Ascending aorta (tissue), 2 donors: ENCODE measurements at regions of chr6 and their contacts with region 1.

Region 1: DNA sequence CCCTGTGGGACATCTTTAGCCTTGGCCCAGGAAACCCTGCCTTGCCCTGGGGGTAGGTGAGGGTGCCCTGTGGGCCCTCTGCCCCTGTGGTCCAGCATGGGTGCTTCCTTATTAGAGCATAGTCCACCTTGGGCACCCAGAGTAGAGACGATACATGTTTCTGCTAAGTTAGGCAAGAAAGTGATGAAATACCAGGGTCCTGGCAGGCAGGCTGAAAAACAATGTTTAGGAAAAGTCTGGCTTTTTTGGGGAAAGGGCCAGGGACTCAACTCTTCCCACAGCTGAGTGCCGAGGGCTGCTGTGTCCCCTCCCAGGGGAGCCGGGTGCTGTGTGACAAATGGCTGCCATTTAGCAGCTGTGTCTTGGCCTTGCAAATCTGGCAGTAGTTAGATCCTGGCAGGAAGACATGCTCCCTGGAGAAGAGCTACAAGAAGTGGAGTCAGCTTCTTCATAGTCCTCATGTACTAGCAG is 61.5 kb downstream of the RREB1 start:
- DNase-seq: peak in 1 of 2 donors; percentile 80
- H3K4me3 ChIP-seq: no peak overlapping the region
- H3K27ac ChIP-seq: peak overlapping the region; percentile 76 to 83
- H3K4me1 ChIP-seq: peaks cover 13 to 49% of the 10 kb centered on the region in 2 donors
- H3K27me3 ChIP-seq: no peaks in the 10 kb centered on the region
- CTCF ChIP-seq: no peak

Region 2: DNA sequence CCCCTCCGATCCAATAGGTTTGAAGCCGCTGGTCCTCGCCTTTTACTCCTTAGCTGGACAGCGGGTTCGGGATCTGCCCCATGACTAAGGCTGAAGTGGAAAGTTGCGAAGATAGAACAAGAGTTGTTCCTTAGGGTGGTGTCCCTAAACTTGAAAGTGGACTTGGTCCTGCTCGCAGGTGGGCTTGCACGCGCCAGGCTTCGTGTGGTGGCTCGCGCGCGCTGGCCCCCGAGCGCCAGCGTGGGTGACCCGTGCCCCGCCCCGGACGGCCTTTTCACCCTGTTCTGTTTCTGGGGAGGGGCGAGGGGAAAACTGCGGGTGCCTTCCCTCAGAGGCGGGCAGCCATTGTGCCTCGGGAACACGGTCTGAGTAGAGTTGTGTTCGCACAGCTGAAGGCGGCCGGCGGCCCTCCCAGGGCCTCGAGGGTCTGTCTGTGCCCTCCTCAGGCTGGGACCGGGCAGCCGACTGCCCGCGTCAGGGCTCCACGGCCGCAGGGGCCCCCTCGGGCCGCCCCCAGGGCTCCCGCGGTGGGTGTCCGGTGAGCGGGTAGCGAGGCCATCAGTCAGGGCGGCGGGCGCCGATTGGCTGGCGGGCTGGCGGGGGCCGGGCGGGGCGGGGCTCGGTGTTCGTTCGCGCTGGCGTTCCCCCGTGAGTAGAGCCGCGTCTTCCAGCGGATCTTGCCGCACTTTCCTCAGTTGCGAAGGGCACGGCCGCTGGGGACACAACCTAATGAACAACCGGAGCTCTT is 28.5 kb before region 1 on chr6:
- intact Hi-C with region 1: loop called (anchors 1 kb)
- DNase-seq: peak; percentile 50 to 92
- H3K4me3 ChIP-seq: peak overlapping the region; percentile 75 to 76
- H3K27ac ChIP-seq: peak overlapping the region; percentile 90 to 96
- H3K4me1 ChIP-seq: peaks cover 0 to 17% of the 10 kb centered on the region in 2 donors
- H3K27me3 ChIP-seq: no peaks in the 10 kb centered on the region
- CTCF ChIP-seq: no peak